ENCODE measurements at regions of chr22 and their contacts with region 1.

Region 1: DNA sequence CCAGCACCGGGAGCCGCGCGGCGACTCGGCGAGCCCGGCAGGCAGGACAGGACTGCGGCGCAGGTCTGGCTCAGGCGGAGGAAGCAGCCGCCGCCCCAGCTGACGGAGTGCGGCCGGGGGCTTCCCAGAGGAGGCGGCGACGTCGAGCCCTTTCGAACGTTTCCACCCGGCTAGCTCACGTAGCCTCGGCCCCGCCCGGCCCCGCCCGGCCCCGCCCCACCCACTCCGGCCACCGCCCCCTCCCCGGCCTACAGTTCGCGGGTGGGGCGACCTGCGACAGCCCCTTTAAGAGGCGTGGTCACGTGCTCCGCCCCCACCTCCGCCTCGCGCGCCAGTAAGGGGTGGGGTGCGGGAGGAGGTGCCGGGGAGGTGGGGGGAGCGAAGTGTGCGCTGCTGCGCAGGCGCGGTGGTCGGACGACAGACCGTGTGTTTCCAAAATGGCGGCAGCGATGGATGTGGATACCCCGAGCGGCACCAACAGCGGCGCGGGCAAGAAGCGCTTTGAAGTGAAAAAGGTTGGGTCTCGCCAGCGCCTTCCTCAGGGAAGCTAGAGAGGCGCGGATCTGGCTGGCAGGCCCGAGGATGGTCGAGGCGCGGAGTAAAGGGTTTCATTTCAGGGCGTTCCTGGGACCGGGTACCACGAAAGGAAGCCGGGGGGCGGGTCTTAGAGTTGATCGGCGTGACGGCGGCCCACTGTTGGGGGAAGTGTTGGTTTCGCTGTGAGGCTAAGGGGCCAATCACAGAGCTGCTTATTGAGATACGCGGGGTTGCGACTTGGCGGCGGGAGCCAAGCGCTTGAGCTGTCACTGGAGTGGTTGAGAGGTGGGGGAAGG is at the start of gene RBX1:
- DNase-seq: peak; percentile 97
- H3K4me3 ChIP-seq: peak within 1 kb of the TSS; percentile 89 to 99 (median 99)
- H3K27ac ChIP-seq: peak within 1 kb of the TSS; percentile 98
- H3K4me1 ChIP-seq: peaks cover 11% of the 10 kb centered on the region
- H3K27me3 ChIP-seq: no peaks in the 10 kb centered on the region
- CTCF ChIP-seq: no peak
- total RNA-seq, gene RBX1: 34.5 to 43.6 TPM

Region 2: GRCh38 chr22:41028841-41029240 is 77.7 kb after region 1 on chr22:
- CTCF ChIA-PET with region 1: no interaction called
- dilution Hi-C with region 1: no loop called
- in situ Hi-C with region 1: no loop called
- intact Hi-C with region 1: no loop called
- DNase-seq: peak; percentile 91
- H3K4me3 ChIP-seq: no peak overlapping the region
- H3K27ac ChIP-seq: no peak overlapping the region
- H3K4me1 ChIP-seq: peaks cover 12% of the 10 kb centered on the region
- H3K27me3 ChIP-seq: no peaks in the 10 kb centered on the region
- CTCF ChIP-seq: no peak

Region 3: DNA sequence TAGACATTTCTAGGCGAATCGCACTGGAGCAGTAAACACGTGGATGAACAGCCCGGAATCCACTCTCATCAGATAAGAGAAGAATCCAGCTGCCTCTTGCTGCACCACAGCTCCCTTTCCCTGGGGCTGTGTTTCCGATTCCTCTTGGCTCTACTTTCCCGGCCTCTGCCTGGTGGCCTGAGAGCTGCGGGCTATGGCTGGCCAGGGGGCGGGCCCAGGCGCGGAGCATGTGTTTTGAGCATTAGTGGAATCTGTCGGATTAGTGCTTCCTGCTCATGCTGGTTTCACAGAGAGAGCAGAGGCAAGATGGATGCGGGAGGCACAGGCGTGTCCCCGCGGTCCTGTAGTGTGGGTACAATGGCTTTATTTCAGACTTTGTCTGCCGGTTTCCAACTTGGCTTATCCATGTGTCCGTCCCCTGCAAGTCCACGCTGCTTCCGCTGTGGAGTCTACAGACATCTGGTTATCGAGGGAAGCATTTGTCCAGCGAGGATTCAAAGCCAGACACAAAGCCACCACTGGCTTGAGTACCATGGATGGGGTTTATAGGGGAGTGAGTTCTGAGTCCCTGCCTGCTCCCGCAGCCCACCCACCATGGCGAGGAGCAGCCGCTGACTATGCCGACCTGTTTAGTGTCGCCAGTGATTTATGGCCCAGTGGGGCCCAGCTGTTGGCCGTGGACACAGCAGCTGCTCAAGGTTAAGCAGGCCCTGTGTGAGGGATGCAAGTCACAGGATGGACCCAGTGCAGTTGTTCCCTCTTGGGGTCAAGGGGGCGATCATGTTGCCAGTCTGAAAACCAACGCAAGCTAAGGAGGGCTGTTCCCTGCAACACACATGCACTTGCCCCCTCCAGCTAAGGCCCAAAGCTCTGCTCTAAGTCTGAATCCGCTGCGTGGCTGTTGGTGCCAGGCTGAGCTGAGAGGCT is 97.9 kb after region 1 on chr22:
- CTCF ChIA-PET with region 1: no interaction called
- dilution Hi-C with region 1: no loop called
- in situ Hi-C with region 1: no loop called
- intact Hi-C with region 1: no loop called
- DNase-seq: peak; percentile 28
- H3K4me3 ChIP-seq: no peak overlapping the region
- H3K27ac ChIP-seq: no peak overlapping the region
- H3K4me1 ChIP-seq: peaks cover 3% of the 10 kb centered on the region
- H3K27me3 ChIP-seq: no peaks in the 10 kb centered on the region
- CTCF ChIP-seq: no peak

Region 4: DNA sequence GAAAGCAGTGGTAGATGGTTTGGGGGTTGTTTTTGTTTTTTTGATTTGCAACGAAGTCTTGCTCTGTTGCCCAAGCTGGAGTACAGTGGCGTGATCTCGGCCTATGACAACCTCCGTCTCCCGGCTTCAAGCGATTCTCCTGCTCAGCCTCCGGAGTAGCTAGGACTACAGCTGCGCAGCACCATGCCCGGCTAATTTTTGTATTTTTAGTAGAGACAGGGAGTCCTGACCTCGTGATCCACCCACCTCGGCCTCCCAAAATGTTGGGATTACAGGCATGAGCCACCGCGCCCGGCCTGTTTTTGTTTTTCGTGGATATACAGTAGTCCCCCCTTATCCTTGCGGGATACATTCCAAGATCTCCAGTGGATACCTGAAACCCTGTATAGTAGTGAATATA is 147.9 kb after region 1 on chr22:
- CTCF ChIA-PET with region 1: no interaction called
- dilution Hi-C with region 1: no loop called
- in situ Hi-C with region 1: loop called (anchors 5 to 25 kb)
- intact Hi-C with region 1: no loop called
- DNase-seq: no peak
- H3K4me3 ChIP-seq: no peak overlapping the region
- H3K27ac ChIP-seq: no peak overlapping the region
- H3K4me1 ChIP-seq: peaks cover 6% of the 10 kb centered on the region
- H3K27me3 ChIP-seq: no peaks in the 10 kb centered on the region
- CTCF ChIP-seq: no peak

Region 5: GRCh38 chr22:41274856-41275255 is 323.7 kb after region 1 on chr22:
- CTCF ChIA-PET with region 1: no interaction called
- dilution Hi-C with region 1: no loop called
- in situ Hi-C with region 1: no loop called
- intact Hi-C with region 1: no loop called
- DNase-seq: no peak
- H3K4me3 ChIP-seq: no peak overlapping the region
- H3K27ac ChIP-seq: no peak overlapping the region
- H3K4me1 ChIP-seq: peaks cover 8% of the 10 kb centered on the region
- H3K27me3 ChIP-seq: no peaks in the 10 kb centered on the region
- CTCF ChIP-seq: no peak

Measured in mammary epithelial cell (primary cell).